Activated T-helper 1 cell treated with anti-CD3 and anti-CD28 coated beads, Interleukin-12 subunit alpha, Interleukin-12 subunit beta, Interleukin-2, Interleukin-4 antibody, amounts not matched to agents 30 ng/mL and 10 ng/mL and 1 ng/mL, durations not matched to agents 14 hours and 24 hours and 36 hours (primary cell): ENCODE measurements at regions of chr3 and their contacts with region 1.

Region 1: GRCh38 chr3:182683453-182683852 is 109.9 kb upstream of the ATP11B start:
- DNase-seq: peak; percentile 38
- H3K4me3 Mint-ChIP-seq: peak overlapping the region; percentile 71
- H3K27ac Mint-ChIP-seq: no peak overlapping the region
- H3K4me1 Mint-ChIP-seq: peaks cover 11% of the 10 kb centered on the region
- H3K27me3 Mint-ChIP-seq: peaks cover 41% of the 10 kb centered on the region

Region 2: GRCh38 chr3:181210275-181210674 is 1473.2 kb before region 1 on chr3:
- intact Hi-C with region 1: loop called (anchors 2 kb)
- DNase-seq: no peak
- H3K4me3 Mint-ChIP-seq: no peak overlapping the region
- H3K27ac Mint-ChIP-seq: no peak overlapping the region
- H3K4me1 Mint-ChIP-seq: no peaks in the 10 kb centered on the region
- H3K27me3 Mint-ChIP-seq: no peaks in the 10 kb centered on the region

Region 3: DNA sequence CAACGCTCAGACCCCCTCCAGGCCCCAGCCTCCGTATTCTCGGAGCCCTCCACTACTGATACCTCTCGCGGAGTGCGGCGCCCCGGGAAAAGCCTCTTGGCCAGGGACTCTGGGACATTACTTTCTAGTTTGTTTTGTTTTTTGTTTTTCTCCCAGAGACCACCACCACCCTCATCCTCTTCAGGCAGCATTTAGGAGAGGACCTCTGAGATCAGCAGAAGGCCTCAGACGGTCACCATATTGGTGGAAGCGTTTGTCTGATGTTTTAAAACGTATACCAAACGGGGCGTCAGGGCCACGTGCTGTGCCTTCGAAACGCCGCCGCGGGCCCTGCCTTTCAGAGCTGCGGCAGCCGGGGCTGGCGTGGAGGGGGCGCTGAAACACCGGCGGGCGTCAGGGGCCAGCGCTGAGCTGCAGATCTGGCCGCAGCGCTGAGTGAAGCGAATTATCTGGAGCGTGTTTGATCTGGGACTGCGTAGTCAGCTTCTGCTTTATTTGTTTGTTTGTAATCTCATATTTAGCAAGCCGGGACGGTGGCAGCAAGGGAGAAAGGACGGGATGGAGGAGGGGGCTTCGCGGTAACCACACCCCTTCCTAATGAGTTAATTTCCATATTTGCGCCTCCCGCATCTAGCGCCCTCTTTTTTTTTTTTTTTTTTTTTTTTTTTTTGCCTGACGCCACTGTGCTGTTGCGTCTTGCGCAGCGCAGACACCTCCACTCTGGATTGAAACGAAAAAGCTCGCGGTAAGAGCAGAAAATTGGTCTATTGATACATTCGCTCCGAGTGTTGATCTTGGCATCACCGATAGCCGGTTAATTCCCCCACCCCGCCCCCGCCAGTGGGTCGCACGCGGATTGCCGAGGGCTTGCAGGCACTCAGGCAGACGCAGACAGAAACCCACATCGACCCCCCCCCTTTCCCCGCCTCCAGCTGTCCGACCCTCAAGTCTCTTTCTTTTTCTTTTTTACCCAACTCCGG is 956.8 kb before region 1 on chr3:
- intact Hi-C with region 1: loop called (anchors 5 kb)
- DNase-seq: no peak
- H3K4me3 Mint-ChIP-seq: peak overlapping the region; percentile 51
- H3K27ac Mint-ChIP-seq: no peak overlapping the region
- H3K4me1 Mint-ChIP-seq: peaks cover 10% of the 10 kb centered on the region
- H3K27me3 Mint-ChIP-seq: peaks cover 73% of the 10 kb centered on the region

Region 4: GRCh38 chr3:182392182-182392937 is 291.1 kb before region 1 on chr3:
- intact Hi-C with region 1: loop called (anchors 1 kb)
- DNase-seq: no peak
- H3K4me3 Mint-ChIP-seq: no peak overlapping the region
- H3K27ac Mint-ChIP-seq: no peak overlapping the region
- H3K4me1 Mint-ChIP-seq: no peaks in the 10 kb centered on the region
- H3K27me3 Mint-ChIP-seq: peaks cover 5% of the 10 kb centered on the region

Region 5: GRCh38 chr3:182671942-182672341 is 11.5 kb before region 1 on chr3:
- intact Hi-C with region 1: no loop called
- DNase-seq: no peak
- H3K4me3 Mint-ChIP-seq: no peak overlapping the region
- H3K27ac Mint-ChIP-seq: no peak overlapping the region
- H3K4me1 Mint-ChIP-seq: no peaks in the 10 kb centered on the region
- H3K27me3 Mint-ChIP-seq: peaks cover 39% of the 10 kb centered on the region